ENCODE measurements at regions of chr4 and their contacts with region 1.

Region 1: GRCh38 chr4:39657465-39657864 is 18.8 kb upstream of the SMIM14 start:
- DNase-seq: no peak
- ATAC-seq: no peak

Region 2: GRCh38 chr4:39469429-39470077 is 187.9 kb before region 1 on chr4:
- intact Hi-C with region 1: loop called in 1 of 2 experiments (anchors 10 kb)
- DNase-seq: peak in 1 of 2 donors; percentile 37
- ATAC-seq: peak; percentile 69

Measured in left colon (tissue), 2 donors.